B cell (primary cell): ENCODE measurements at regions of chr6 and their contacts with region 1.

Region 1: GRCh38 chr6:154951345-154952200 is 43.5 kb upstream of the TIAM2 start:
- DNase-seq: peak; percentile 71
- ATAC-seq: peak; percentile 90
- H3K4me3 ChIP-seq: peak overlapping the region in 1 of 5 experiments; percentile 12
- H3K4me3 Mint-ChIP-seq: peak overlapping the region; percentile 78
- H3K27ac ChIP-seq: peak overlapping the region; percentile 37 to 75
- H3K27ac Mint-ChIP-seq: peak overlapping the region; percentile 95
- H3K4me1 ChIP-seq: peaks cover 21 to 26% of the 10 kb centered on the region in 2 donors
- H3K4me1 Mint-ChIP-seq: peaks cover 36% of the 10 kb centered on the region
- H3K27me3 ChIP-seq: no peaks in the 10 kb centered on the region
- H3K27me3 Mint-ChIP-seq: no peaks in the 10 kb centered on the region
- CTCF ChIP-seq: no peak

Region 2: GRCh38 chr6:154928325-154928922 is 23.1 kb before region 1 on chr6:
- CTCF ChIA-PET with region 1: interaction called, 10 read pairs
- POLR2A ChIA-PET with region 1: no interaction called
- intact Hi-C with region 1: no loop called
- DNase-seq: peak; percentile 66
- ATAC-seq: peak; percentile 54
- H3K4me3 ChIP-seq: no peak overlapping the region
- H3K4me3 Mint-ChIP-seq: no peak overlapping the region
- H3K27ac ChIP-seq: no peak overlapping the region
- H3K27ac Mint-ChIP-seq: no peak overlapping the region
- H3K4me1 ChIP-seq: peaks cover 13% of the 10 kb centered on the region in 2 donors
- H3K4me1 Mint-ChIP-seq: peaks cover 19% of the 10 kb centered on the region
- H3K27me3 ChIP-seq: no peaks in the 10 kb centered on the region
- H3K27me3 Mint-ChIP-seq: no peaks in the 10 kb centered on the region
- CTCF ChIP-seq: peak; percentile 88